CD8-positive, alpha-beta T cell (primary cell): ENCODE measurements at regions of chr2 and their contacts with region 1.

Region 1: GRCh38 chr2:101793277-101793969 is 95.9 kb downstream of the MAP4K4 start:
- DNase-seq: peak in 3 of 9 experiments; percentile 12 to 40 (median 32)
- ATAC-seq: no peak
- H3K4me3 ChIP-seq: no peak overlapping the region
- H3K4me3 Mint-ChIP-seq: no peak overlapping the region
- H3K27ac ChIP-seq: no peak overlapping the region
- H3K27ac Mint-ChIP-seq: peak overlapping the region; percentile 22
- H3K4me1 ChIP-seq: peaks cover 16% of the 10 kb centered on the region
- H3K4me1 Mint-ChIP-seq: peaks cover 68% of the 10 kb centered on the region
- H3K27me3 ChIP-seq: no peaks in the 10 kb centered on the region
- H3K27me3 Mint-ChIP-seq: no peaks in the 10 kb centered on the region
- CTCF ChIP-seq: no peak

Region 2: DNA sequence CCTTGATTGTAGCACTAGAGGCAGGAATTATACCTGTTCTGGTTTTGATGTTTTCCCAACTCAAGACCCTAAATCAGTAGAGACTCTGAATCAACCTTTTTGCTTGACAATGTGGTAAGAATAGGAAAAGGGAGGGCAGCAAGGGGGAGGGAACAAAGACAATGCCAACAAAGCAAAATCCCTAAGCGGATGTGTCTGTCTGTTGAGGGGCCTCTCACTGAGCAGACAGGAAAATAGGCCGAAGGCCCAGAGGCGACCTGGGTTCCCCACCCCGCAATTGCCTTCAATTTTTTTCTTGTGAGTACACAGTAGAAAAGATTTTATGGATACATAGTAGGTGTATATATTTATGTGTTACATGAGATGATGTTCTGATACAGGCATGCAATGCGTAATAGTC is 20.3 kb before region 1 on chr2:
- CTCF ChIA-PET with region 1: interaction called, 3 read pairs
- POLR2A ChIA-PET with region 1: no interaction called
- intact Hi-C with region 1: loop called in 1 of 2 experiments (anchors 2 kb)
- DNase-seq: peak in 1 of 9 experiments; percentile 29
- ATAC-seq: peak; percentile 48
- H3K4me3 ChIP-seq: no peak overlapping the region
- H3K4me3 Mint-ChIP-seq: peak overlapping the region; percentile 32
- H3K27ac ChIP-seq: no peak overlapping the region
- H3K27ac Mint-ChIP-seq: peak overlapping the region; percentile 55
- H3K4me1 ChIP-seq: peaks cover 80% of the 10 kb centered on the region
- H3K4me1 Mint-ChIP-seq: peaks cover 89% of the 10 kb centered on the region
- H3K27me3 ChIP-seq: no peaks in the 10 kb centered on the region
- H3K27me3 Mint-ChIP-seq: no peaks in the 10 kb centered on the region
- CTCF ChIP-seq: no peak

Region 3: DNA sequence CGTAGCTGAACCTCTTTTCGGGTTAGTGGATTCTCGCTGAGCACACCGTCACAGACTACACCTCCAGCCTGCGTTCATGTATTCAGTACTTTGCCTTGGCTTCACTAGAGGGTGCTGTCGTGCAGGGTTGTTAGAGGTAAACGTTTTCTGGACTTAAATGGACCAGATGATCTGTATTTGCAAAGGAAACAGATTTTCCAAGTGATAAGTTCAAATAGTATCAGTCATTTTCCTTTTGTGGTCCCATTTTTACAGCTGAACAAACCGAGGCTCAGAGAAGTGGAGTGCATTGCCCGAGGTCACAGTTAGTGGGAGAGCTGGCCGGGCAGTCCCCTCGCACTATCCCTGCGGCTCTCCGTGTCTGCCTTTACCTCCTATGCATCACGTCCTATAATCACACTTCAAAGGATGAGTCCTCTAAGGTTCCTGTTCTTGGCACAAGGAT is 29.9 kb after region 1 on chr2:
- CTCF ChIA-PET with region 1: interaction called, 4 read pairs
- POLR2A ChIA-PET with region 1: interaction called, 3 read pairs
- intact Hi-C with region 1: loop called in 1 of 2 experiments (anchors 5 kb)
- DNase-seq: peak; percentile 39 to 84 (median 71)
- ATAC-seq: peak; percentile 90
- H3K4me3 ChIP-seq: no peak overlapping the region
- H3K4me3 Mint-ChIP-seq: peak overlapping the region; percentile 62
- H3K27ac ChIP-seq: peak overlapping the region in 1 of 2 experiments; percentile 52
- H3K27ac Mint-ChIP-seq: peak overlapping the region; percentile 91
- H3K4me1 ChIP-seq: peaks cover 51% of the 10 kb centered on the region
- H3K4me1 Mint-ChIP-seq: peaks cover 76% of the 10 kb centered on the region
- H3K27me3 ChIP-seq: no peaks in the 10 kb centered on the region
- H3K27me3 Mint-ChIP-seq: no peaks in the 10 kb centered on the region
- CTCF ChIP-seq: peak; percentile 82